ENCODE measurements at regions of chr7 and their contacts with region 1.

Region 1: DNA sequence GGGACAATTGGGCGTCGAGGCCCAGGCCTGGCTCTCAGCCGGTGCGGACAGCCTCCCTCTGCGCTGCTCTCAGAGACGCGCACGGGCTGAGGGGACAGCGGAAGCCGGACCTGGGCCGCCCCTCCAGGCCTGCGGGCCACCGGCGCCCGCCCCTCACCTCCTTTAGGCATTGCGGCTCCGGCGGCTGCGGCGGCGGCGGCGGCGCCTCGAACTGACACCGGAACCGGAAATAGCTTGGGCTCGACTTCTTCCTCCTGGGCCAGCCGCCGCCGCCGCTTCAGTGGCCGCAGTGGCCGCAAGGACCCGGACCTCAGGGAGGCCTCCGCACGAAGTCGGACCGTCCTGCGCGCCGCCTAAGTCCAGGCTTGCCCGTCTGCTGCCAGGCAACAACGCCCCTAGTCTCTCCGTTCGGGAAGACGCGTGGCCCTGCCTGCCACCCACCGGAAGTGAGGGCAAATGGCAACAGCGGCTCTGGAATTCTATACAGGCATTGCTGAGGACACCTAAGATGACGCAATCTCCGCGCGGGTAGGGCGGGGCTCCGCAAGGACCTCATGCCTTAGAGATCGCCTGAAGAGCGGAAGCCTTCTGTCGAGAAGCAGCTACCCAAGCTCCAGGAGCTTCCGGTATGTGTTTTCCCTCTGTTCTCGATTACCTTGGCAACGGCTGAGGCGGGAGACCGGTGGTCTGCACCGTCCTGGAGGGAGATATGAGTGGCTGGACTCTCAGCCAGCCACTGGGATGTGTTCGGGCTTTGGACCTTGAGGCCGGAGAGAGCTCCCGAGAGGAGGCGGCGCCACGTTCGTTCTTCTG is at the starts of genes BUD31 and PDAP1:
- DNase-seq: peak; percentile 96 to 98
- ATAC-seq: peak; percentile 98
- H3K4me3 ChIP-seq: peak within 1 kb of the TSS; percentile 67 to 73
- H3K27ac ChIP-seq: peak within 1 kb of the TSS; percentile 70 to 89
- H3K4me1 ChIP-seq: peaks cover 0 to 3% of the 10 kb centered on the region in 2 donors
- H3K27me3 ChIP-seq: no peaks in the 10 kb centered on the region
- total RNA-seq, gene BUD31: 53.5 to 57.0 TPM
- total RNA-seq, gene PDAP1: 74.8 to 94.9 TPM

Region 2: GRCh38 chr7:99278177-99278576 is 130.4 kb before region 1 on chr7:
- intact Hi-C with region 1: no loop called
- DNase-seq: no peak
- ATAC-seq: no peak
- H3K4me3 ChIP-seq: no peak overlapping the region
- H3K27ac ChIP-seq: no peak overlapping the region
- H3K4me1 ChIP-seq: no peaks in the 10 kb centered on the region
- H3K27me3 ChIP-seq: no peaks in the 10 kb centered on the region

Region 3: DNA sequence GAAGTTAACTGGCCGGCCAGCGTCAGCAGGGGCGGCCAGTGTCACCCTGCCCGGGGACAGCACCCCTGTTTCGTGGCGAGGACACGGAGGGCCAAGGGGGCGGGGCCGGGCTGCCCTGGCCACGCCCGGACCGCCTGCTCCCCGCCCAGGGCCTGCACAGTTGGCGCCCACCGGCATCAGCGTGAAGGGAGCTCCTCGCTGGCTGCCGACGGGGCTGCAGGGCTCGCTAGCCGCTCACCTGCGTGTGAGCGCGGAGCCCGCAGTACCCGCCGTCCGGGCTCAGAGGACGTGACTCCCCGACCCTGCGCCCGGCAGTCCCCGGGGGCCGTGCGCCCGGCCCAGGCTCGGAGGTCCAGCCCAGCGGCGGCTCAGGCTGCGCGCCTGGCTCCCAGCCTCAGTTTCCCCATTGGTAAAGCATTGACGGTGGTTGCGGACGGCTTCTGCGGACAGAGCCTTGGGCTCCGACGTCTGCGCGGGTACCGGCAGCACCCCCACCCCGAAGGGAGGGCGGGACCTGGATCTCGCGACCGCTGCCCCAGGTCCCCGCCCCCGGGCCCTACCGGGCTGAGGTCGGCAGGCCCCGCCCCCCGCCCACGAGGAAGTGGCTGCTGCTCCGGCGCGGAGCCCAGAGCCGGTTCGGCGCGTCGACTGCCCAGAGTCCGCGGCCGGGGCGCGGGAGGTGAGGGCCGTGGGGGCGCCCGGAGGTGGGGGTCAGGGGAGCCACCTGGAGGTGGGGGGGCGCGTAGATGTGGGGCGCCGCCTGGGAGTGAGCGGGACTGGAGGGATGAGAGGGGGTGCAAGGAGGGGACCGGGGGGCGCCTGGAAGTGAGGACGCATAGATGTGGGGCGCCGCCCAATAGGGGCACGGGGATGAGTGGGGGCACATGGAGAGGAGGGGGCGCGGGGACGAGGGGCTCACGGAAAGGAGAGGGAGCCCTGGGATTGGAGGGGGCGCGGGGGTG is 34.2 kb before region 1 on chr7 and contains the start of gene ARPC1B:
- intact Hi-C with region 1: loop called in 1 of 2 experiments (anchors 2 kb)
- DNase-seq: peak; percentile 91 to 94
- ATAC-seq: peak; percentile 87
- H3K4me3 ChIP-seq: peak within 1 kb of the TSS; percentile 50 to 82
- H3K27ac ChIP-seq: peak within 1 kb of the TSS in 1 of 2 donors; percentile 49
- H3K4me1 ChIP-seq: no peaks in the 10 kb centered on the region
- H3K27me3 ChIP-seq: no peaks in the 10 kb centered on the region
- total RNA-seq, gene ARPC1B: 134 to 172 TPM

Measured in aorta (tissue), 5 donors.